HEK293 (cell line): ENCODE measurements at regions of chr11 and their contacts with region 1.

Region 1: DNA sequence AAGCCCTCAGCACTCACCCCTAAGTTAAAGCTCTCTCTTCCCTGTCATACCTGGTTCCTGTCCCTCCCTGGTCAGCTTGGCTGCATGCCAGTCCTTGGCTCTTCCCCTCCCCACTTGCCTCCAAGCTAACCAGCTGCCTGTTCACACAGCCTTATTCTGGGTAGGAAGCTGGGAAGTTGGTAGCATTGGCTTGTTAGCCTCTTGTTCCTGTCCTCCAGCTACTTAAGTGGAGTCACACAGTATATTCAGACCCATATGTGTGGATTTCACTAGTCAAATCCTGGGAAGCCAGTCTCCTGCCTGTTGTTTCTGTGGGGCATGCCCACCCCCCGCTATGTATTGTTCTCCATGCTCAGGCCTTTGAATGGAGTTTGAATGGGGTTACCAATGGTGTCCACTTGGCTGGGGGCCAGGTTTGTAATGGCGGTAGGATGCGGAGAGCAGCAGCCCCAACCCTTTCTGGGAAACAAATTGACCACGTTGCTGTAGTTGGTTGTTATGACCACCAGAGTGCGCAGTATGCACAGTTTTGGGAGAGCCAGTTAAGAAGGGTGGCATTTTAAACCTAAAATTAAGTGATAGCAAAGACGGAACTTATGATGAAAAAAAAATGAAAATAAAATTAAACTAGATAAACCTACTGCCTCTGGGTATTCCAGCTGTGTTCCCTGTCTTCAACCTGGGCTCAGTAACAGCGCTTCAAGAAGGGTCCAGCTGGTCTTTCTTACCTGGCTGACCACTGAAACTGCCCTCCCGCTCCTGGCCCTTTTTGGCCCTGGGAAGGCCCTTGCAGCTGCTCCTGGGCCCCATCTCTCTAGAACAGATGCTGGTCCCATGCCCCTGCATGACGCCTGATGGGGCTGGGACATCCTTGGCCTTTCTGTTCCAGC is 10.7 kb upstream of the RPS3 start:
- H3K4me3 ChIP-seq: no peak overlapping the region
- H3K27ac ChIP-seq: no peak overlapping the region
- H3K4me1 ChIP-seq: no peaks in the 10 kb centered on the region
- CTCF ChIP-seq: peak; percentile 58

Region 2: DNA sequence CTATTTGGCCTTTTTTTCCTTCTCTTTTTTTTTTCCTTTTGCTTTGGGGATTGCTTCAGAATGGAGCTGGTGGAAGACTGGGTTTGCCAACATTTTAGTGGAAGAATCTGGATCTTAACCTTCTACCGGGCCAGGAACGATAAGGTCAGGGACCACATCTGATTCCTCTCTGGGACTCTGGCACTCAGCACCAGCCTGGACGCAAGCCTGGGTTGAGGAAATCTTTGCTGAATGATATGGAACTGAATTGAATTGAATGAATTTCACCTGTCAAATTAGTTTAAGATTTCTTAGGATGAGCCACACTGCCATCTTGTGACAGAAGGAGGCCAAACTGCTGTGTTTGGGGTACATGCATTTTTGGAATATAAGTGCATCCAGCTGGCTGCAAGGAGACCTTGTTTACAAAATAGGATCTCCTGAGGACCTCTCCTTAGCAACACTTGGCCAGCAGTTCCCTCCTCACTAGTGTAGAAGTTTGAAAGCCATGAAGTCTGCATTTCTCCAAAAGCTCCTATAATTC is 117.7 kb before region 1 on chr11:
- CTCF ChIA-PET with region 1: interaction called, 53 read pairs
- POLR2A ChIA-PET with region 1: no interaction called
- H3K4me3 ChIP-seq: no peak overlapping the region
- H3K27ac ChIP-seq: no peak overlapping the region
- H3K4me1 ChIP-seq: no peaks in the 10 kb centered on the region
- CTCF ChIP-seq: no peak

Region 3: GRCh38 chr11:75328426-75329277 is 60.0 kb before region 1 on chr11:
- CTCF ChIA-PET with region 1: interaction called, 40 read pairs
- POLR2A ChIA-PET with region 1: no interaction called
- H3K4me3 ChIP-seq: no peak overlapping the region
- H3K27ac ChIP-seq: no peak overlapping the region
- H3K4me1 ChIP-seq: no peaks in the 10 kb centered on the region
- CTCF ChIP-seq: peak; percentile 52; the same call in 1 of the 2 replicates

Region 4: DNA sequence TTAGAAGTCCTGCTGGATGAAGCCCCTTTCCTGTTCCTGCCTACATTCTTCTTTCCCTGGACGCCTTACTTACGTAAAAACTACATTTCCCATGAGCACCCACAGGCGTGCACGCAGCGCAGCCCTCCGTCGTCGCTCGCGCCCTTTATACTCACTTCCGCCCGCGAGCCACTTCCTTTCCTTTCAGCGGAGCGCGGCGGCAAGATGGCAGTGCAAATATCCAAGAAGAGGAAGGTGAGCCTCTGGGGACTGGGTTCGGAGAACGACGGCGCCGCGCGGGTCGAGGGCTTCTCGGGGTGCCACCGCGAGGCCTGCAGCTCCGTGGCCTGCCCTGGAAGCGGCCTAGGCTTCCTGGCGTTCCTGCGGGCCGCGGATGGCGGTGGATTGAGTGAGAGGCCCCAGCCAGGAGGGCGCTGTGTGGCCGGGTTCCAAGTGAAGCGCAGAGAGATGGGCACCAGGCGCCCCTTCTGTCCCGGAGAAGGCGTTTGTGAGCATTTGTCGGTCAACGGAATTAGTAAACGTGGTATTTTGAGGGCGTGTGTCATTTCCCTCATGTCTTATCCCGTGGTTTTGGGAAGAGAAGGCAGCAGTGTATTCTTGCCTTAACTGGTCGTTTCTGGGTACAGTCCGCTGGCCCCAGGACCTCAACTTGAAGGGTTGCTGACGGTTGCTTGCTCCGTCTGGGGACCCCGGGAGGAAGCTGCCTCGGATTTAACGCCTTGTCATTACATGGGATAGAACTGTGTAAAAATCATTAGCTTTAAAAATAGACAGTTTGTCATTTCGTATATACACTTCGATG is 10.9 kb after region 1 on chr11 and contains the start of gene RPS3:
- CTCF ChIA-PET with region 1: interaction called, 17 read pairs
- POLR2A ChIA-PET with region 1: no interaction called
- H3K4me3 ChIP-seq: peak within 1 kb of the TSS; percentile 94
- H3K27ac ChIP-seq: peak within 1 kb of the TSS; percentile 99
- H3K4me1 ChIP-seq: peaks cover 4% of the 10 kb centered on the region
- CTCF ChIP-seq: peak; percentile 91

Region 5: DNA sequence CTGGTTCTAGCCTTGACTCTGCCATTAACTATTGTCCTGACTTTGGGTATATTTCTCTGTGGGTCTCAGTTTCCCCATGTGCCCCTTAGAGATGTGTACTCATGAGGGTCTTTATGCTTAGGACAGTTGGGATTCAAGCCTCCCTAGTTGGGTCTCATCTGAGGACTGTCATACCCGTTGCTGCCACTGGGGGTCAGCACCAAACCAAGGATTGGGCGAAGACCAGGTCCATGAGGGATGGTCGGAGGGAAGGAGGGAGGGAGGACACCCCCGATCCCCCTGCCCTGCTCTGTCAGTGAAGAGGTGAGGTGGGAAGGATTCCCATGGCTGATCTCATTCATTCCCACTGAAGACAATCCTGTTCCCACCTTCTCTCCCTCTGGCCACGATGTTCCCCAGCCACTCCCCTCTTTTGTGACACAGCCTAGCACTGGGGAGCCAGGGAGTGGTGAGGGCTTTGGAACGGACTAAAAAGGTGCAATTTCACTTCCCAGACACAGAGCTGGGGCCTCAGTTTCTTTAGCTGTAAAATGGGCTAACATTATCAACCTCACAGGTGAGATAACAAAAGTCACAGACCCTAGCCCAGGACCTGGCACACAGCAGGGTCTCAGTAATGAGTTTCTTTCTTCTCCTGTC is 56.8 kb after region 1 on chr11:
- CTCF ChIA-PET with region 1: interaction called, 27 read pairs
- POLR2A ChIA-PET with region 1: no interaction called
- H3K4me3 ChIP-seq: no peak overlapping the region
- H3K27ac ChIP-seq: no peak overlapping the region
- H3K4me1 ChIP-seq: no peaks in the 10 kb centered on the region
- CTCF ChIP-seq: peak; percentile 70

Region 6: DNA sequence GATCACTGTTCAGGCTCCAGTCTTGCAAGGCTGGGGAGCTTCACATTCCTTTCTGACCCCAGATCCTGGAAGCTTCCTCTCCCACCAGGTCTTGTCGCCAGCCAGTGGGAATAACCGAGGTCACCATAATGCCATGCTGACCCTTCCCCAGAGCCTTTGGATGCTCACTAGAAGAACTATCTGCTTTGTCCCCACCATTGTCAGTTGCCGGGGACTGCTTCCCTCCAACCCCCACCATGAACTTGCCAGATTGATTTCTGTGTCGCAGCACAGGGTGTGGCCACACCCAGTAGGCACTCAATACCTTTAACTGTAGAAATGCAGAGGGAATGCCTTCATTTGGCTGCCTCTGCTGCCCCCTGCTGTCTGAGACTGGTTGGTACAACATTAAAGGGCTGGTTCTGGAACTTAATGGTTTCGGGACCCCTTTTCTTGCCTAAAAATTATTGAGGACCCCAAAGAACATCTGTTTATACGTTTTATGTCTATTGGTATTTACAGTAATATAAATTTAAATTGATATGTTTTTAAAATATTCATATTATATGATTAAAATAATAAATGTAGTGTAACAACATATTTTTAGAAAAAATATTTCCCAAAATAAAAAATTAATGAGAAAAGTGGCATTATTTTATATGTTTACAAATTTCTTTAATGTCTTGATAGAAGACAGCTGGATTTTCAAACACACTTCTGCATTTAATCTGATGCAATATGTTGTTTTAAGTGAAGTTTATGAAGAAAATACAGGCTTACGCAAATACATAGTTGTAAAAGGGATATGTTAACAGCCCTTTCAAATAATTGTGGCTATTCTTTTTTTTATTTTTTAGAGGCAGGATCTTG is 143.8 kb after region 1 on chr11:
- CTCF ChIA-PET with region 1: interaction called, 94 read pairs
- POLR2A ChIA-PET with region 1: no interaction called
- H3K4me3 ChIP-seq: no peak overlapping the region
- H3K27ac ChIP-seq: no peak overlapping the region
- H3K4me1 ChIP-seq: no peaks in the 10 kb centered on the region
- CTCF ChIP-seq: peak; percentile 60; the same call in 1 of the 2 replicates